Activated naive CD4-positive, alpha-beta T cell treated with anti-CD3 and anti-CD28 coated beads, Interleukin-2, amount 10 ng/mL, durations not matched to agents 7 days and 5 days (primary cell): ENCODE measurements at regions of chr5 and their contacts with region 1.

Region 1: DNA sequence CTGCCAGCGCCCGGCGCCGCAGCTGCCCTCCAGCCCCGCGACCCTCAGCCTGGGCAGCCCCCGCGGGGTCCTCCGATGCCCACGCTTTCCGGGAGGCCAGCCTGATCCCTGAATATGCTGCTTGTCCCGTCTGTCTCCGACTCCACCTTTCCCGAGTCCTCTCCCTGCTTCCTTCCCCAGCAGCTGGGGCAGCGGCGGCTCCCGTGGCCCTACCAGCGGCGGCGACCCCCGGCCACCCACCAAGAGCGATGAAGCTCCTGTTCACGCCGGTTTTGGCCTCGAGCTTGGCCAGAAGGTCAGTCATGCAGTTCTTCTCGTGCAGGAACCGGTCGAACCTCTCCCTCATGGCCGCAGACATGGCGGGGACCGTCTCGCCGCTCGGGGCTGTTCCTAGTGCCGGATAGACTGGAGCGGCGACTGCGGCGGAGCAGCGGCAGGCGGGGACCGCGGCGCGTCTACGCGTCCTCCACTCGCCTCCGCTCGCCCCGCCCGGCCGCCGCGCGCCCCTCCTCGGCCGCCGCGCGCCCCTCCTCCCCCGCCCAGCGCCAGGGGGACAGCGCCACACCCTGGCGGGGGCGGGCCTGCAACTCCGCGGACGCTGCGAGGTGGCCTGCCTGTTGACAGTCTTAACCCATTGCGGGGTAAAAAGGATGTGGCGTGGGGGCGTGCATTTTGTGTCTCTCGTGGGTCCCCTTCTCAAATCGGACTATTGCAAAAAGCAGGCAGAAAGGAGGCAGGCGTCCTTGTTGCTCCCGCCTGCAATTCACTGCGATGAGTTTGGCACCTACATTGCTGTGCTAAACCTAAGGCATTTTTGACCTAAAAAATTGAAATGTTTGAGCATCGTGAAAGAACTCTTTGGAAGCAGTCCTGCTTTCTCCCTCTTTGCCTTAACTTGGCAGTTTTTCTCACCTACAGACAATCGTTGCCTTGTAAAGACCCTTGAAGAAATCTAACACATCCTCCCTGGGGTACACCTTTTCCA is at the start of gene REEP5:
- DNase-seq: peak; percentile 87
- H3K4me3 Mint-ChIP-seq: peak within 1 kb of the TSS; percentile 93
- H3K27ac Mint-ChIP-seq: peak within 1 kb of the TSS; percentile 97
- H3K4me1 Mint-ChIP-seq: peaks cover 73% of the 10 kb centered on the region
- H3K27me3 Mint-ChIP-seq: peaks cover 5% of the 10 kb centered on the region

Region 2: GRCh38 chr5:112960863-112961504 is 38.9 kb after region 1 on chr5:
- CTCF ChIA-PET with region 1: interaction called, 15 read pairs
- DNase-seq: no peak
- H3K4me3 Mint-ChIP-seq: no peak overlapping the region
- H3K27ac Mint-ChIP-seq: no peak overlapping the region
- H3K4me1 Mint-ChIP-seq: peaks cover 35% of the 10 kb centered on the region
- H3K27me3 Mint-ChIP-seq: no peaks in the 10 kb centered on the region

Region 3: DNA sequence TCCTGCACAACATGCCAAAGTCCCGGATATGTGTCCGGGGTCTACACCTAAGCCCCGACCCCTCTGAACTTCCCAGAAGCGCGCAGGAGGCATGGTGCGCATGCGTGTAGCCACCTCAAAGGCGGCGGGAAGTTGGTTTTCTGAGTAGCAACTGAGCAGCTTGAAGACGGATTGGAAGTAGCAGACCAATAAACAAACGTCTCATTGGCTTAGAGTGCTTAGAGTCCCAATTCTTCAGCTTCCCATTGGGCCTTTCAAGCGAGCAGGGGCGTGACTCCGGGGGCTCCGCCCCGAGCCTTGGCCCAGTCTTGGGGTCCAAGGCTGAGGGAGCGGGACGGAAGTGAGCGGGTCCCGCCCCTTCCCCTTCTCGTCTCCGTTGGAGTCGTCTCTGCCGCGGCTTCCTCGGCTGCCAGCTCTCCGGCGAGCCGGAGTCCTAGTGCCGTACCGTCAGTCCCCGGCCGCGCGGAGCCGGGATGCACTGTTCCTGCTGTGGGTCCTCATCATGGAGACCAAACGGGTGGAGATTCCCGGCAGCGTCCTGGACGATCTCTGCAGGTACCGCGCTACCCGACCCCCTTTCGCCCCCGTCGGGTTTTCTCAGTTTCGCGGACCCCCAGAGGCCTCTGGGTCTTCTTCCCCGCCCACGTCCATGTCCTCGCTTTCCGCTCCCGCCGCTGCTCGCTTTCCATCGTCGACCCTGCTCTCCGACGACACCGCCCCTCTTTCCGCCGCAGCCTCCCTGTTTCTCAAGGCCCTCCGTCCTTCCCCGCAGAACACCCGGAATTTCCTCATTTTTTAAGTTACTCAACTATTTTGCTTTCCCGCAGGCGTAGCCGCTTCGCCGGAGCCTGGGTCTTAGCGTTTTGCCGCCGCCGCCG is 54.5 kb after region 1 on chr5 and contains the start of gene DCP2:
- CTCF ChIA-PET with region 1: interaction called, 22 read pairs
- DNase-seq: peak; percentile 97
- H3K4me3 Mint-ChIP-seq: peak within 1 kb of the TSS; percentile 96
- H3K27ac Mint-ChIP-seq: peak within 1 kb of the TSS; percentile 98
- H3K4me1 Mint-ChIP-seq: peaks cover 48% of the 10 kb centered on the region
- H3K27me3 Mint-ChIP-seq: peaks cover 4% of the 10 kb centered on the region